HepG2 (cell line): ENCODE measurements at regions of chr15 and their contacts with region 1.

Region 1: DNA sequence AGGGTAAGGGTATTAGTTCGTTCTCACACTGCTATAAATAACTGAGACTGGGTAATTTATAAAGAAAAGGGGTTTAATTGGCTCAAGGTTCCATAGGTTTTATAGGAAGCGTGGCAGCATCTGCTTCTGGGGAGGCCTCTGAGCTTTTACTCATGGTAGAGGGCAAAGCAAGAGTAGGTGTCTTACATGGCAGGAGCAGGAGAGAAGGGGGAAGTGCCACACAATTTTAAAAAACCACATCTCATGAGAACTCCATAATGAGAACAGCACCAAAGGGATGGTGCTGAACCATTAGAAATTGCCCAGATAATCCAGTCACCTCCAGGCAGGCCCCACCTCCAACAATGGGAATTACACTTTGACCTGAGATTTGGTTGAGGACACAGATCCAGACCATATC is 12.2 kb downstream of the RNF111 start:
- DNase-seq: no peak
- ATAC-seq: no peak
- H3K4me3 ChIP-seq: no peak overlapping the region
- H3K27ac ChIP-seq: no peak overlapping the region
- H3K4me1 ChIP-seq: no peaks in the 10 kb centered on the region
- H3K27me3 ChIP-seq: no peaks in the 10 kb centered on the region
- CTCF ChIP-seq: no peak
- EP300 ChIP-seq: no peak
- POLR2A ChIP-seq: no peak
- RAD21 ChIP-seq: no peak

Region 2: GRCh38 chr15:58361291-58361759 is 638.4 kb before region 1 on chr15:
- CTCF ChIA-PET with region 1: no interaction called
- POLR2A ChIA-PET with region 1: no interaction called
- in situ Hi-C with region 1: no loop called
- intact Hi-C with region 1: no loop called
- DNase-seq: no peak
- ATAC-seq: no peak
- H3K4me3 ChIP-seq: no peak overlapping the region
- H3K27ac ChIP-seq: no peak overlapping the region
- H3K4me1 ChIP-seq: peaks cover 15% of the 10 kb centered on the region
- H3K27me3 ChIP-seq: peaks cover 0 to 5% of the 10 kb centered on the region in 2 experiments; a peak in 2 of 5 replicates
- CTCF ChIP-seq: no peak
- EP300 ChIP-seq: no peak
- POLR2A ChIP-seq: no peak
- RAD21 ChIP-seq: no peak

Region 3: DNA sequence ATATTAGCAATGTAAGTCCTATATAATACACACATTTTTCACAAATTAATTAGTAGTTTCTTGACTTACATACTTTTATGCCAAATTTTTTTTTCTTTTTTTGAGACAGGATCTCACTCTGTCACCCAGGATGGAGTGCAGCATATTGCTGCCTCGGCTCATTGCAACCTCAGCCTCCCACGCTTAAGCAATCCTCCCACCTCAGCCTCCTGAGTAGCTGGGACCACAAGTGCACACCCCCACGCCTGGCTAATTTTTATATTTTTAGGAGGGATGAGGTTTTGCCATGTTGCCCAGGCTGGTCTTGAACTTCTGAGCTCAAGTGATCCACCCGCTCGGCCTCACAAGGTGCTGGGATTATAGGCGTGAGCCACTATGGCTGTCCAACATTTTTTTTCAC is 42.3 kb after region 1 on chr15:
- CTCF ChIA-PET with region 1: no interaction called
- POLR2A ChIA-PET with region 1: no interaction called
- in situ Hi-C with region 1: loop called (anchors 10 kb)
- intact Hi-C with region 1: no loop called
- DNase-seq: no peak
- ATAC-seq: no peak
- H3K4me3 ChIP-seq: no peak overlapping the region
- H3K27ac ChIP-seq: no peak overlapping the region
- H3K4me1 ChIP-seq: no peaks in the 10 kb centered on the region
- H3K27me3 ChIP-seq: no peaks in the 10 kb centered on the region
- CTCF ChIP-seq: no peak
- EP300 ChIP-seq: no peak
- POLR2A ChIP-seq: no peak
- RAD21 ChIP-seq: no peak